IMR-90 (cell line): ENCODE measurements at regions of chr5 and their contacts with region 1.

Region 1: DNA sequence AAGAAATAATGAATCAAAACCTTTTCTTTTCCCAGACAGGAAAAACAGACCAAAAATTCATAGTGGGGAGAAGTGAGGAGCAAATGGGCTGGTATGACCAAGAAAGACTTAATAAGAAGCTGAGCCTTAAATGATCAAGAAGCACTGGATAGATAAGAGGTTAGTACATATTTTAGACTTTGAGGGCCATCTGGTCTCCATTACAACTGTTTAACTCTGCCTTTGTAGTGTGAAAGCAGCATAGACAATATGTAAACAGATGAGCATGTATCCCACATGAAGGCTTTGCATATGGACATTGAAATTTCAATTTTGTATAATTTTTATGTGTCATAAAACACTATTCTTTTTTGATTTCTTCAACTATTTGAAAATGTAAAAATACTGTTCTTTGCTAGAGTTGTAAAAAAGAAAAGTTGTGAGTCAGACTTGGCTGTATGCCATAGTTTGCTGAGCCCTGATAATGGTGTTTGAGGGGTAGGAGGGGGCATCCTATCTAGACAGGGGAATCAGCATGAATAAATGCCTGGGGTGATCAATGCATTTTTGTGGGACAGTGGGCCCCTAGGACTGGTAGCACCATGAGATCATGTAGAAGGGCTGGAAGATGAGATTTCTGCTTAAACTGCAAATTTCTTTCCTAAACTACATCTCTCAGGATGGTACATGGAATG is 91.8 kb upstream of the GPR151 start:
- DNase-seq: no peak
- ATAC-seq: no peak
- H3K4me3 ChIP-seq: no peak overlapping the region
- H3K27ac ChIP-seq: no peak overlapping the region
- H3K4me1 ChIP-seq: no peaks in the 10 kb centered on the region
- H3K27me3 ChIP-seq: no peaks in the 10 kb centered on the region
- CTCF ChIP-seq: no peak
- POLR2A ChIP-seq: no peak
- RAD21 ChIP-seq: no peak

Region 2: GRCh38 chr5:145495741-145496140 is 1112.1 kb before region 1 on chr5:
- CTCF ChIA-PET with region 1: no interaction called
- POLR2A ChIA-PET with region 1: no interaction called
- dilution Hi-C with region 1: no loop called
- in situ Hi-C with region 1: no loop called
- intact Hi-C with region 1: no loop called
- DNase-seq: peak; percentile 94
- ATAC-seq: peak; percentile 85
- H3K4me3 ChIP-seq: no peak overlapping the region
- H3K27ac ChIP-seq: no peak overlapping the region
- H3K4me1 ChIP-seq: peaks cover 4% of the 10 kb centered on the region; the same call in 1 of the 2 replicates
- H3K27me3 ChIP-seq: no peaks in the 10 kb centered on the region
- CTCF ChIP-seq: no peak
- POLR2A ChIP-seq: no peak
- RAD21 ChIP-seq: no peak

Region 3: DNA sequence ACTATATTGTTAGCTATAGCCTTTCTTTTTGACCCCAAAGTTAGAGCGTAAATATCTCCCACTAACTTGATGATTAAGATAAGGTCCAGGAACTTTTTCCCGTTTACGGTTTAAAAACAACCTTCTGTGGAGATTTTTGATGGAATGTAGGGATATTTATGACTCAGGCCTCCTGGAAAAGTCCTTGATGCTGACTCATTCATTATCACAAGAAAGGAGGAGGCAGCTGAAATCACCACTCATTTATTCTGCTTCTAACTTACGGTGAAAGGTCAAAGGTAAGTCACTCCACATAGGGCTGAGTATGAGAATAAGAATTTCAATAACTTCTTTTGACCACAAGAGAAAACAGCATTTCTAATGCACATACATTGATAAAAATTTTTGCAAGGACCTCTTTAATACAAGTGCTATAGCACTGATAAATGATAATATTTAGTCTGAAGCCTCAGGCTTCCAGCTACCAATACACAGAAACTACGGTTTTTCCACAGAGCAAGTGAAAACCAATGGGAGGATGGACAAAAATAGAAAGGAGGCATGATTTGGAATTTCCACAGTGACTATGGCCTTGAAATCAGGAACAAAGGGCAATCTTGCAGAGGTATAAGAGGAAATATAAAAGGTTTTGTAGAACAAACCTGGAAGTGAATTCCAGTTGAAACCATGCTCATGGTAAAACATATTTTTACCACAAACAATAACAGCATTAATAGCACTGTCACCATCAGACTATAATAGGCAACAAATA is 124.3 kb after region 1 on chr5:
- CTCF ChIA-PET with region 1: no interaction called
- POLR2A ChIA-PET with region 1: no interaction called
- dilution Hi-C with region 1: no loop called
- in situ Hi-C with region 1: no loop called
- intact Hi-C with region 1: no loop called
- DNase-seq: peak; percentile 87
- ATAC-seq: peak; percentile 75
- H3K4me3 ChIP-seq: no peak overlapping the region
- H3K27ac ChIP-seq: no peak overlapping the region
- H3K4me1 ChIP-seq: no peaks in the 10 kb centered on the region
- H3K27me3 ChIP-seq: no peaks in the 10 kb centered on the region
- CTCF ChIP-seq: no peak
- POLR2A ChIP-seq: no peak
- RAD21 ChIP-seq: no peak

Region 4: GRCh38 chr5:146794326-146795029 is 186.7 kb after region 1 on chr5:
- CTCF ChIA-PET with region 1: no interaction called
- POLR2A ChIA-PET with region 1: no interaction called
- dilution Hi-C with region 1: no loop called
- in situ Hi-C with region 1: no loop called
- intact Hi-C with region 1: loop called (anchors 10 kb)
- DNase-seq: no peak
- ATAC-seq: no peak
- H3K4me3 ChIP-seq: no peak overlapping the region
- H3K27ac ChIP-seq: no peak overlapping the region
- H3K4me1 ChIP-seq: no peaks in the 10 kb centered on the region
- H3K27me3 ChIP-seq: no peaks in the 10 kb centered on the region
- CTCF ChIP-seq: no peak
- POLR2A ChIP-seq: no peak
- RAD21 ChIP-seq: no peak